Activated CD4-positive, alpha-beta memory T cell treated with anti-CD3 and anti-CD28 coated beads for 36 hours (primary cell): ENCODE measurements at regions of chr2 and their contacts with region 1.

Region 1: DNA sequence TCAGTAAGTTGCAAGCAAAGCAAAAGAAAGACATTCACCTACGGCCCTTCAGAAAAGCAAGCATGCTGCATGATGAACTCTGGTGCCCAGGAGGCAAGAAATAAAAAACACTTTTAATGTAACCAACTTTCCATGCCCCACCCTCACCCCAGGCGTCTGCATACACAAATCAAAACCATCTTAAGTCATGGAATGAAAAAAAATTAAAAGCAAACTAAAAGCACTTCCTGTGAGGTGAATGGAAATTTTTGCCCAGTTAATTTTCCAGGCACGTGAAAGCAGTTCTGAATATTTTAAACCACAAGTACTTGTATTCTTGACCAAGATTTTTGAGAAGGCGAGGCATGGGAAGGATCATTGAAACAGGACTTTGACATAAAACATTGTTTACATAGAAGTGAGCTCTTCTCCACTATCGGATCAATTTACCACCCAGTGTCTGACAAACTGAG is 2.5 kb upstream of the ICOS start:
- DNase-seq: peak; percentile 76
- H3K4me3 Mint-ChIP-seq: peak overlapping the region; percentile 74
- H3K27ac Mint-ChIP-seq: peak overlapping the region; percentile 94
- H3K4me1 Mint-ChIP-seq: peaks cover 59% of the 10 kb centered on the region
- H3K27me3 Mint-ChIP-seq: no peaks in the 10 kb centered on the region

Region 2: DNA sequence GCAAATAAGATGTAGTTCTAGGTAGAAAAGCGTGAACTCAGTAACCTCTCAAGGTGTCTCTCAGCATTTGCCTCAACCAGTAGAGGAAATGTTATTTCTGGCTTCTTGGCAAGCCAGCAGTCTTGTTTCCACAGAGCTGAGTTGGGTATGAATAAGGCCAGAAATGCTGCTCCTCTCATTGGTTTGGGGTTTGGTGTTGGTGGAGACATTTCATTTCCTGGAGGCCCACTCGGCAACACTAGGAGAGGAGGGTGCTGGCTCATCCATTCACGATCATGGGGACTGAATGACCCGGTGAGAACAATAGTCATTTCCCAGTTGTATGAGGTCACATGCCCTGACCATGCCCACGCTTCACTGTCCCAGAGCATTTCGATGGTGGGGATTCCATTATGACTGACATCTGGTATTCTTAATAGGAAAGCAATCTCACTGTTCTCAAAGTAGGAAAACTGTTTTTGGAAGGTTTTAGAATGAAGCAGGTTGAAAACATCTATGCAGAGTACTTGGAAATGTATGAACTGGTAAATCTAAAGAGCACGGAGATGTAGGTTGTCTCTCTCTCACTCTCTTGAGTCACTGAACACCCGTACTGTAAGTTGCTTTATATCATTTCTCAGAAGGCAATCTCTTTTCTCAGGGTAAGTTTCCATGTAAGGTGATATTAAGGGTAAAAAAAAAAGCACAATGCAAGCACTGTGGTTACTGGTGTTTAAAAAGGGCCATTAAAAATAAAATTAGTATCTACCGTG is 103.6 kb before region 1 on chr2:
- CTCF ChIA-PET with region 1: no interaction called
- POLR2A ChIA-PET with region 1: interaction called, 4 read pairs
- intact Hi-C with region 1: loop called (anchors 1 kb)
- DNase-seq: peak; percentile 90
- H3K4me3 Mint-ChIP-seq: peak overlapping the region; percentile 58
- H3K27ac Mint-ChIP-seq: peak overlapping the region; percentile 98
- H3K4me1 Mint-ChIP-seq: peaks cover 34% of the 10 kb centered on the region
- H3K27me3 Mint-ChIP-seq: no peaks in the 10 kb centered on the region

Region 3: DNA sequence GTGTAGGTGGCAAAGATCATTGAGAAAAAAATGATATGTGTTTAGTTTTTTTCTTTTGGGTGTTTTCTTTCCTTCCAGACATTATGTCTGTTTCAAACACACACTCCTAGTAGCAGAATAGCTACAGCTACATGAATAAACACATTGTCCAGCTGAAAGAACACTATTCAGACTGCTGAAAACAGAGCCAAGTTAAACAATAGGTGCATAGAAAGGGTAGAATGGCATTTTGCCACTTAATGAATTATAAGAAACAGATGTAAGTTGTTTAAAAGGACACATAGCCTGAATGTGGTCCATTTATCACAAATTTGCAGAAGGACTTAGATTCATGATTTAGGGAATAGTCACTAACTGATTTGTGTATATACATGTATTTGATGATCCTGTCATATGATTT is 46.4 kb before region 1 on chr2:
- CTCF ChIA-PET with region 1: interaction called, 4 read pairs
- POLR2A ChIA-PET with region 1: interaction called, 24 read pairs
- intact Hi-C with region 1: loop called (anchors 2 kb)
- DNase-seq: no peak
- H3K4me3 Mint-ChIP-seq: no peak overlapping the region
- H3K27ac Mint-ChIP-seq: peak overlapping the region; percentile 90
- H3K4me1 Mint-ChIP-seq: peaks cover 84% of the 10 kb centered on the region
- H3K27me3 Mint-ChIP-seq: peaks cover 2% of the 10 kb centered on the region

Region 4: GRCh38 chr2:203909261-203909967 is 24.7 kb before region 1 on chr2:
- CTCF ChIA-PET with region 1: interaction called, 5 read pairs
- POLR2A ChIA-PET with region 1: interaction called, 15 read pairs
- intact Hi-C with region 1: loop called (anchors 2 kb)
- DNase-seq: peak; percentile 42
- H3K4me3 Mint-ChIP-seq: no peak overlapping the region
- H3K27ac Mint-ChIP-seq: peak overlapping the region; percentile 59
- H3K4me1 Mint-ChIP-seq: peaks cover 33% of the 10 kb centered on the region
- H3K27me3 Mint-ChIP-seq: peaks cover 4% of the 10 kb centered on the region

Region 5: DNA sequence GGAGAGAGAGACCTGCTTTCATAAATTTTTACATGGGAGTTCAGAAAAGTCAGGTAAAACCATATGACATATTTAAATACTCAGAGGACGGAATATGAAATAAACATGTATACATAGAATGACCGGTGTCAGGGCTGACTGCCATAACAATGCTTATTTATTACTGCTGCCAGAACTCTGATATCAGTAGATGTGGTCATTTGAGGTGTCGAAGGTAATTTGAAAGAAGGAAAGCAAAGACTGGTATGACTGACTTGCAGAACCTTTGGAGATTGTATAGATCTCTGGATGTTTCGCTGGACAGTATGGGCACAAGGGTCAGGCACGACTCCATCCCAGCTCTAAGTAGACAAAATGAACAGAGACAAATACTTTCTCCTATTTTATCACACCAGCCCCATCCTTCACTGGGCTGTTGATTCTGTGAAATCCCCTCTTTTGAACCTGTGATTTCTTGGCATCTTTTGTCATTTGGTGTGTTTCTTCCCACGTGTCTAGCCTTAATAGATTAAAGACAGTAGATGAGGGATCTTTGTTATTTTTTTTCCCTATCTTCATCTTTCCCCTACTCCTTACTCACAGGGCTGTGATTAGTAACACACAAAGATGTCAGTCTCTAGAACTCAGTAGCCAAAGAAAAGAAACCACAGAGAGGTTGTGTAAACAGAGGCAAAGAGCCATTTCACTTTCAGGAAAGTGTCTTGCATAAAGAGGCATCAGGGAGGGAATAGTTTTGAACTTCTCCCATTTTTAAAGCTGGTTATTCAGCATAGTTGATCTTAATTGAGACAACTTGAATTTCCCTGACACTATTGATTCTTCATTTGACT is 64.1 kb after region 1 on chr2:
- CTCF ChIA-PET with region 1: interaction called, 5 read pairs
- POLR2A ChIA-PET with region 1: interaction called, 9 read pairs
- intact Hi-C with region 1: loop called (anchors 1 kb)
- DNase-seq: no peak
- H3K4me3 Mint-ChIP-seq: peak overlapping the region; percentile 21
- H3K27ac Mint-ChIP-seq: peak overlapping the region; percentile 82
- H3K4me1 Mint-ChIP-seq: peaks cover 65% of the 10 kb centered on the region
- H3K27me3 Mint-ChIP-seq: no peaks in the 10 kb centered on the region

Region 6: DNA sequence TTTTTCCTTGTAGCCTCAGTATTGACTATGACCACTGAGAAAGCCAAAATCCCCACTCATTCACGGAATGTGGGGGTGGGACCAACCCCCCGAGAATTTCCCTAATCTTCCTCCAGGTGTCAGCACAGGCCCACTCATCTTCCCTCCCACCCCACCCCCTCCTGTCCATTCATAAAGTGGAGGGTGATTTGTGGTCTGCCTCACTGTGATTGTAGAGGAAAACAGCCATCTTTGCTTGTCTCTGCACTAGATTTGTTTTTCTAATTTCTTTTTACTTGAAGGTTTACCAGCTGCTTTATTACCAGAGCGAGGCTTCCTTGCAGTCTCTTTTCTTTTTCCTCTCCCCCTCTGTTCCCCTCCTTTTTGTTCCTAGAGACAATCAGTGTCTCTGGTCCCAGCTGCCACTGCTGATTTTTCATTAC is 174.3 kb after region 1 on chr2:
- CTCF ChIA-PET with region 1: interaction called, 3 read pairs
- POLR2A ChIA-PET with region 1: interaction called, 3 read pairs
- intact Hi-C with region 1: loop called (anchors 1 kb)
- DNase-seq: peak; percentile 78
- H3K4me3 Mint-ChIP-seq: peak overlapping the region; percentile 55
- H3K27ac Mint-ChIP-seq: peak overlapping the region; percentile 90
- H3K4me1 Mint-ChIP-seq: peaks cover 71% of the 10 kb centered on the region
- H3K27me3 Mint-ChIP-seq: peaks cover 4% of the 10 kb centered on the region